CD4-positive, alpha-beta memory T cell (primary cell): ENCODE measurements at regions of chr17 and their contacts with region 1.

Region 1: DNA sequence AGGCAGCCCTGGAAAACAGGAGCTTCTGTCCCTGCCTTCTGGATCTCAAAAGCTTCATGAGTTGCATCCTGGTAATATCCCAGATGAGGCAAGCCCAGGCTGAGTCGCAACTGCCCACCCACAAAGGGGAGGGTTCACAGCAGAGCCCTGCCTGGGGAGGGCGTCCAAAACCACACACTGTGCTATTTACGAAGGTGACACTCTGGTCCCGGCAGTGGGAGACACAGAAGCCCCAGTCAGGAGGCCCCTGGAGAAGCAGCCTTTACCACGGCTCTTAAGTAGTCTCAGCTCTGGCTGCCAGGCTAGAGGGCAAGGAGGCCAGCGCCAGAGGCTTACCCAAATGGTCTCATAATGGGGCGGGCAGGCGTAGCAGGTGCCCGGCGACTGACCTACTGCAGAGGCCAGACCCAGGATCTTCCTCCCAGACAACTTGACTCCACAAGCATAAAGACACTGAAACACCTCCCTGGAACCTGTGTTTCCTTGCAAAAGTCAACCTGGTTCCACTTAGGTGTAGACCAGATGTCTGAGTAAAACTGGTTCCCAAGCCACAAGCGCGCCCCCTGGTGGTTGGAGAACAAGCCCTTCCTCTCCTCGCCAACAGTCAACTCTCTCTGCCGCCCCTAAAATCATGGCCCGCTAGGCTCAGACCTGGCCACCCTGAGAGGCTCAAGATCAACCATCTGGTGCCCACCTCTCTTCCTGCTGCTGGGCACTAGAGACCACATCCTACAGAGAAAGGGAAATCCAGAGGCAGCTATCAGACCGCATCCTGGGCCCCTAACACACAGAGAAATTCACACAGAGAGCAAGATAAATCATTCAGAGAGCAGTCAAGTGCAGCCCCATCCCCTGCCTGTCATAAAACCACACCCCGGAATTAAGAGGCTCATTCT is 5.2 kb downstream of the AXIN2 start:
- DNase-seq: peak; percentile 86 to 89 (median 87)
- H3K4me3 ChIP-seq: peak overlapping the region; percentile 5 to 48
- H3K4me3 Mint-ChIP-seq: no peak overlapping the region
- H3K27ac ChIP-seq: peak overlapping the region; percentile 42
- H3K27ac Mint-ChIP-seq: no peak overlapping the region
- H3K4me1 ChIP-seq: peaks cover 27% of the 10 kb centered on the region
- H3K4me1 Mint-ChIP-seq: peaks cover 19 to 31% (median 25%) of the 10 kb centered on the region in 4 donors
- H3K27me3 ChIP-seq: no peaks in the 10 kb centered on the region
- H3K27me3 Mint-ChIP-seq: no peaks in the 10 kb centered on the region

Region 2: DNA sequence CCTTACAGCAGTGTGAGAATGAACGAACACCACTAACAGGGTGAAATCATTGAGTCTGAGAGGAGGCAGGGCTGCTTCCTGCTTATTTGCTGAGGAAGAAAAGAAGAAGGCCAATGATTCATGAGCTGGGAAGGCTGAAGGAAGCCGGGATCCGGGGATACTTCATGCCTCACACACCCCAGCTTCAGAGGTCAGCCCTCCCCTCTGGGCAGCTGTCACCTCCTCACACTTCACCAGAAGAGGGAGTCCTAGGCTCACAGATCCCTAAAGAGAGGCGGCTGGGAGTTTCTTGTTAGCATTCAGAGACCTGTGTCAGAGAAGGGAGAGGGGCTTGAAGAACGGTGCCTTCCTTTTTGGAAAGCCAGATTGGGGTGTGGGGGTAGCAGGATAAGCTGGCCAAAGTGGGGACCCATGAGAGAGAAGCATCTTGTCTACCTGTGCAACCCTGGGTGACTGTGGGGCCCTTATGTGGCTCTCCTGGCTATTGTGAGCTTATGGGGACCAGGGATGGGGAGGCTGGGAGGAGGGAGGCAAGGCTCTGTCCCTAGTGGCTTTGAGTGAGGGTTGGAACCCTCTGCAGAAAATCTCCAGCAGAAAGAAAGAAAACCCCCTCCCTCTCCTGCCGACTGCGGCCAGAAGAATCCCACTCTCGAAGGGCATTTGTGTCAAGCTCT is 324.5 kb before region 1 on chr17:
- CTCF ChIA-PET with region 1: interaction called, 7 read pairs
- POLR2A ChIA-PET with region 1: interaction called, 3 read pairs
- intact Hi-C with region 1: loop called (anchors 2 kb)
- DNase-seq: peak; percentile 42 to 51 (median 46)
- H3K4me3 ChIP-seq: no peak overlapping the region
- H3K4me3 Mint-ChIP-seq: no peak overlapping the region
- H3K27ac ChIP-seq: no peak overlapping the region
- H3K27ac Mint-ChIP-seq: no peak overlapping the region
- H3K4me1 ChIP-seq: peaks cover 24% of the 10 kb centered on the region
- H3K4me1 Mint-ChIP-seq: peaks cover 23 to 46% (median 26%) of the 10 kb centered on the region in 4 donors
- H3K27me3 ChIP-seq: no peaks in the 10 kb centered on the region
- H3K27me3 Mint-ChIP-seq: no peaks in the 10 kb centered on the region

Region 3: GRCh38 chr17:65418628-65419027 is 137.6 kb before region 1 on chr17:
- CTCF ChIA-PET with region 1: interaction called, 4 read pairs
- POLR2A ChIA-PET with region 1: no interaction called
- intact Hi-C with region 1: loop called (anchors 2 kb)
- DNase-seq: no peak
- H3K4me3 ChIP-seq: no peak overlapping the region
- H3K4me3 Mint-ChIP-seq: no peak overlapping the region
- H3K27ac ChIP-seq: no peak overlapping the region
- H3K27ac Mint-ChIP-seq: no peak overlapping the region
- H3K4me1 ChIP-seq: no peaks in the 10 kb centered on the region
- H3K4me1 Mint-ChIP-seq: no peaks in the 10 kb centered on the region
- H3K27me3 ChIP-seq: no peaks in the 10 kb centered on the region
- H3K27me3 Mint-ChIP-seq: peaks cover 0 to 5% of the 10 kb centered on the region in 2 donors

Region 4: GRCh38 chr17:65523853-65524664 is 32.2 kb before region 1 on chr17:
- CTCF ChIA-PET with region 1: interaction called, 12 read pairs
- POLR2A ChIA-PET with region 1: interaction called, 7 read pairs
- intact Hi-C with region 1: loop called (anchors 1 kb)
- DNase-seq: no peak
- H3K4me3 ChIP-seq: peak overlapping the region in 1 of 2 donors; percentile 30
- H3K4me3 Mint-ChIP-seq: peak overlapping the region; percentile 66 to 81 (median 75)
- H3K27ac ChIP-seq: no peak overlapping the region
- H3K27ac Mint-ChIP-seq: peak overlapping the region; percentile 64 to 96 (median 91)
- H3K4me1 ChIP-seq: peaks cover 33% of the 10 kb centered on the region
- H3K4me1 Mint-ChIP-seq: peaks cover 29 to 56% (median 42%) of the 10 kb centered on the region in 4 donors
- H3K27me3 ChIP-seq: no peaks in the 10 kb centered on the region
- H3K27me3 Mint-ChIP-seq: no peaks in the 10 kb centered on the region

Region 5: GRCh38 chr17:65567566-65567965 is 11.3 kb after region 1 on chr17:
- CTCF ChIA-PET with region 1: interaction called, 10 read pairs
- POLR2A ChIA-PET with region 1: no interaction called
- intact Hi-C with region 1: no loop called
- DNase-seq: no peak
- H3K4me3 ChIP-seq: no peak overlapping the region
- H3K4me3 Mint-ChIP-seq: no peak overlapping the region
- H3K27ac ChIP-seq: no peak overlapping the region
- H3K27ac Mint-ChIP-seq: no peak overlapping the region
- H3K4me1 ChIP-seq: peaks cover 11% of the 10 kb centered on the region
- H3K4me1 Mint-ChIP-seq: peaks cover 5 to 17% (median 12%) of the 10 kb centered on the region in 4 donors
- H3K27me3 ChIP-seq: no peaks in the 10 kb centered on the region
- H3K27me3 Mint-ChIP-seq: peaks cover 3 to 4% of the 10 kb centered on the region in 2 donors

Region 6: GRCh38 chr17:66165513-66166123 is 609.4 kb after region 1 on chr17:
- CTCF ChIA-PET with region 1: interaction called, 3 read pairs
- POLR2A ChIA-PET with region 1: no interaction called
- intact Hi-C with region 1: loop called (anchors 2 kb)
- DNase-seq: peak in 4 of 5 donors; percentile 47 to 56 (median 52)
- H3K4me3 ChIP-seq: no peak overlapping the region
- H3K4me3 Mint-ChIP-seq: no peak overlapping the region
- H3K27ac ChIP-seq: no peak overlapping the region
- H3K27ac Mint-ChIP-seq: no peak overlapping the region
- H3K4me1 ChIP-seq: no peaks in the 10 kb centered on the region
- H3K4me1 Mint-ChIP-seq: peaks cover 10 to 20% (median 13%) of the 10 kb centered on the region in 4 donors
- H3K27me3 ChIP-seq: no peaks in the 10 kb centered on the region
- H3K27me3 Mint-ChIP-seq: no peaks in the 10 kb centered on the region